Heart right ventricle (tissue), 16 donors: ENCODE measurements at regions of chr21 and their contacts with region 1.

Region 1: DNA sequence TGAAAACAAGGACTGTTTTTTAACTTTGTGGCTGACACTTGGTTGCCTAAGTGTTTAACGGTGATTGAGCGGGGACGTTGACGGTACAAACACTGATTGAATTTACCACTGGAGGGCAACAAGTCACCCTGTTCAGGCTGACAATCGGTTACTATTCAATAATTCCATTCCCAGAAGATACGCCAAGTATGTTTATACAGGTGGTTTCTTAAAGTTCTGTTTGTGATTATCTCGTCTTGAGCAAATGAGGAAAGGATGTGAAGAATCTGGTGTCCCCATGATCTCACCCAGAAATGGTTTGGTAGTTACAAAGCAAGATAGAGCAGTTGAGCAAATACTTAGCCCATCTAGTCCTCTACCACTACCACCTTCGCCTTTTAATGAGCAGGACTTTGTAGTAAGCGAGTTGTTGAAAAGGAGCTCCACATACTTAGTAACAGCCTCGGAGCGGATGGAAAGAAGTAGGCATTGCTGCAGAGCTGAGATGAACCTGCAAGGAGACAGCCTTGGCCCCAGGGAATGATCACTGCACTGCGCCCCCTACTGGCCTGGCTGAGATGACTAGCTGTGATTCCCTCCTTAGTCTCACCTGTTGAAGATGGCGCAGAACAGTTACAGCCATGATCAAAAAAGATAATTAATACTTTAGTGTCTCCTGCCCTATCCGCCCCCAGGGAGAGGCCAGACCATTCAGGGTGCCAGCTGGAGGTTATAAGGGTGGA is 36.3 kb downstream of the IFNAR1 start:
- DNase-seq: peak; percentile 77 to 82
- ATAC-seq: peak; percentile 81 to 92 (median 86)
- H3K4me3 ChIP-seq: peak overlapping the region in 9 of 10 donors; percentile 7 to 50 (median 44)
- H3K27ac ChIP-seq: peak overlapping the region in 9 of 10 donors; percentile 43 to 89 (median 60)
- H3K4me1 ChIP-seq: peaks cover 0 to 54% (median 23%) of the 10 kb centered on the region in 9 donors
- H3K27me3 ChIP-seq: no peaks in the 10 kb centered on the region
- CTCF ChIP-seq: peak; percentile 72 to 87 (median 84)

Region 2: DNA sequence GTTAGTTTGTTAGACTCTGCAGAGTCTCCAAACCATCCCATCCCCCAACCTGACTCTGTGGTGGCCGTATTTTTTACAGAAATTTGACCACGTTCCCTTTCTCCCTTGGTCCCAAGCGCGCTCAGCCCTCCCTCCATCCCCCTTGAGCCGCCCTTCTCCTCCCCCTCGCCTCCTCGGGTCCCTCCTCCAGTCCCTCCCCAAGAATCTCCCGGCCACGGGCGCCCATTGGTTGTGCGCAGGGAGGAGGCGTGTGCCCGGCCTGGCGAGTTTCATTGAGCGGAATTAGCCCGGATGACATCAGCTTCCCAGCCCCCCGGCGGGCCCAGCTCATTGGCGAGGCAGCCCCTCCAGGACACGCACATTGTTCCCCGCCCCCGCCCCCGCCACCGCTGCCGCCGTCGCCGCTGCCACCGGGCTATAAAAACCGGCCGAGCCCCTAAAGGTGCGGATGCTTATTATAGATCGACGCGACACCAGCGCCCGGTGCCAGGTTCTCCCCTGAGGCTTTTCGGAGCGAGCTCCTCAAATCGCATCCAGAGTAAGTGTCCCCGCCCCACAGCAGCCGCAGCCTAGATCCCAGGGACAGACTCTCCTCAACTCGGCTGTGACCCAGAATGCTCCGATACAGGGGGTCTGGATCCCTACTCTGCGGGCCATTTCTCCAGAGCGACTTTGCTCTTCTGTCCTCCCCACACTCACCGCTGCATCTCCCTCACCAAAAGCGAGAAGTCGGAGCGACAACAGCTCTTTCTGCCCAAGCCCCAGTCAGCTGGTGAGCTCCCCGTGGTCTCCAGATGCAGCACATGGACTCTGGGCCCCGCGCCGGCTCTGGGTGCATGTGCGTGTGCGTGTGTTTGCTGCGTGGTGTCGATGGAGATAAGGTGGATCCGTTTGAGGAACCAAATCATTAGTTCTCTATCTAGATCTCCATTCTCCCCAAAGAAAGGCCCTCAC is 335.3 kb before region 1 on chr21 and contains the start of gene OLIG2:
- intact Hi-C with region 1: no loop called
- DNase-seq: no peak
- ATAC-seq: peak in 1 of 8 donors; percentile 31
- H3K4me3 ChIP-seq: peak within 1 kb of the TSS in 4 of 10 donors; percentile 0 to 40 (median 13)
- H3K27ac ChIP-seq: peak within 1 kb of the TSS in 1 of 10 donors; percentile 36
- H3K4me1 ChIP-seq: peaks cover 0 to 74% (median 44%) of the 10 kb centered on the region in 9 donors
- H3K27me3 ChIP-seq: peaks cover 58 to 100% (median 100%) of the 10 kb centered on the region in 7 donors
- CTCF ChIP-seq: no peak
- total RNA-seq, gene OLIG2: not detected

Region 3: DNA sequence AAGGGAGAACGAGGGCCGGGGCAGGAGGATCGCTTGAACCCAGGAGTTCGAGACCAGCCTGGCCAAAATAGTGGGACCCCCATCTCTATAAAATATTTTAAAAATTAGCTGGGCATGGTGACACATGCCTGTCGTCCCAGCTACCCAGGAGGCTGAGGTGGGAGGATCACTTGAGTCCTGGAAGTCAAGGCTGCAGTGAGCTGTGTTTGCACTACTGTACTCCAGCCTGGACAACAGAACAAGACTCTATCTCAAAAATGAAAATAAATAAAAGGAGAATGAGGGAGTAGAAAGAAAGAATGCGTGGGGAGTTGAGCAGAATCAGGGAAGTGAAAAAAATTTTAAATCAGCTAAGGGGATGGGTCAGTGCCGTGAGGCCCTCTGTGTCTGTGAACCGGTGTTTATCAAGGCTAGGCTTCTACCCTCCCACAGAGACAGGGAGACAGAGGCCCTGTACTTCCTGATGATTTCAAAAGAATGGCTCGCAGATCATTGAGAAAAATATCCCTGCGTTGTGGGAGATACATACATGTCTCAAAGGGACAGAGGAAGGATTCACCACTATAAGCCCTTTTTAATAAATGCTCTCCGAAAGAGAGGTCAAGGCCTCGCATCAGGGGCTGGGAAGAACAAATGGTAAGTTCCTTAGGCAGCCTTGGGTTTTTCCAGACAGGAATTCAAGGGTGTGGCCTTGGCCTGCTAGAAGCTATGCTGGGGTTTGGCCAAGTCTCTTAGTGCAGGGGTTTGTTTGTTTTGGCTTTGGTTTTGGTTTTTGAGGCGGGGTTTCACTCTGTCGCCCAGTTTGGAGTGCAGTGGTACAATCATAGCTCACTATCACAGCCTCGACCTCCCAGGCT is 74.2 kb before region 1 on chr21:
- intact Hi-C with region 1: loop called in 1 of 10 experiments (anchors 5 kb)
- DNase-seq: peak in 1 of 2 donors; percentile 80
- ATAC-seq: peak; percentile 79 to 92 (median 86)
- H3K4me3 ChIP-seq: no peak overlapping the region
- H3K27ac ChIP-seq: peak overlapping the region; percentile 37 to 92 (median 75)
- H3K4me1 ChIP-seq: peaks cover 8 to 54% (median 33%) of the 10 kb centered on the region in 9 donors
- H3K27me3 ChIP-seq: no peaks in the 10 kb centered on the region
- CTCF ChIP-seq: no peak

Region 4: GRCh38 chr21:33324291-33325221 is 36.5 kb before region 1 on chr21 and contains the start of gene IFNAR1:
- intact Hi-C with region 1: loop called in 2 of 10 experiments (anchors 5 kb)
- DNase-seq: peak; percentile 98 to 99
- ATAC-seq: peak; percentile 98 to 100 (median 99)
- H3K4me3 ChIP-seq: peak within 1 kb of the TSS; percentile 67 to 99 (median 93)
- H3K27ac ChIP-seq: peak within 1 kb of the TSS; percentile 92 to 100 (median 99)
- H3K4me1 ChIP-seq: peaks cover 2 to 49% (median 36%) of the 10 kb centered on the region in 9 donors
- H3K27me3 ChIP-seq: no peaks in the 10 kb centered on the region
- CTCF ChIP-seq: no peak
- total RNA-seq, gene IFNAR1: 16.5 to 38.5 (median 23.9) TPM

Region 5: GRCh38 chr21:33449616-33450015 is 88.6 kb after region 1 on chr21:
- intact Hi-C with region 1: loop called in 4 of 10 experiments (anchors 5 to 10 kb)
- DNase-seq: no peak
- ATAC-seq: no peak
- H3K4me3 ChIP-seq: no peak overlapping the region
- H3K27ac ChIP-seq: no peak overlapping the region
- H3K4me1 ChIP-seq: peaks cover 0 to 12% (median 5%) of the 10 kb centered on the region in 9 donors
- H3K27me3 ChIP-seq: no peaks in the 10 kb centered on the region
- CTCF ChIP-seq: no peak